Psoas muscle (tissue), 8 donors: ENCODE measurements at regions of chr1 and their contacts with region 1.

Region 1: GRCh38 chr1:108182959-108183700 is 17.0 kb downstream of the SLC25A24 start:
- DNase-seq: no peak
- ATAC-seq: no peak
- H3K4me3 ChIP-seq: no peak overlapping the region
- H3K27ac ChIP-seq: peak overlapping the region; percentile 7
- H3K4me1 ChIP-seq: peaks cover 14% of the 10 kb centered on the region
- H3K27me3 ChIP-seq: no peaks in the 10 kb centered on the region
- CTCF ChIP-seq: no peak

Region 2: GRCh38 chr1:108199781-108200570 is 16.8 kb after region 1 on chr1 and contains the start of gene SLC25A24:
- intact Hi-C with region 1: loop called in 1 of 2 experiments (anchors 2 kb)
- DNase-seq: peak; percentile 82 to 90
- ATAC-seq: peak; percentile 93 to 96 (median 94)
- H3K4me3 ChIP-seq: peak within 1 kb of the TSS; percentile 90
- H3K27ac ChIP-seq: peak within 1 kb of the TSS; percentile 91
- H3K4me1 ChIP-seq: peaks cover 11% of the 10 kb centered on the region
- H3K27me3 ChIP-seq: no peaks in the 10 kb centered on the region
- CTCF ChIP-seq: no peak
- total RNA-seq, gene SLC25A24: 5.1 to 9.4 (median 7.9) TPM